K562 (cell line): ENCODE measurements at regions of chr15 and their contacts with region 1.

Region 1: GRCh38 chr15:79101866-79102578 is 11.4 kb upstream of the RASGRF1 start:
- DNase-seq: peak in 2 of 4 experiments; percentile 29 to 41
- ATAC-seq: peak; percentile 69
- H3K4me3 ChIP-seq: no peak overlapping the region
- H3K27ac ChIP-seq: no peak overlapping the region
- H3K4me1 ChIP-seq: no peaks in the 10 kb centered on the region
- H3K27me3 ChIP-seq: peaks cover 5 to 34% of the 10 kb centered on the region in 2 experiments; a peak in 2 of 5 replicates
- CTCF ChIP-seq: peak; percentile 16 to 46 (median 43); a peak in 3 of 6 replicates
- EP300 ChIP-seq: no peak
- POLR2A ChIP-seq: no peak
- RAD21 ChIP-seq: peak in 1 of 2 experiments; percentile 47; a peak in 2 of 4 replicates

Region 2: DNA sequence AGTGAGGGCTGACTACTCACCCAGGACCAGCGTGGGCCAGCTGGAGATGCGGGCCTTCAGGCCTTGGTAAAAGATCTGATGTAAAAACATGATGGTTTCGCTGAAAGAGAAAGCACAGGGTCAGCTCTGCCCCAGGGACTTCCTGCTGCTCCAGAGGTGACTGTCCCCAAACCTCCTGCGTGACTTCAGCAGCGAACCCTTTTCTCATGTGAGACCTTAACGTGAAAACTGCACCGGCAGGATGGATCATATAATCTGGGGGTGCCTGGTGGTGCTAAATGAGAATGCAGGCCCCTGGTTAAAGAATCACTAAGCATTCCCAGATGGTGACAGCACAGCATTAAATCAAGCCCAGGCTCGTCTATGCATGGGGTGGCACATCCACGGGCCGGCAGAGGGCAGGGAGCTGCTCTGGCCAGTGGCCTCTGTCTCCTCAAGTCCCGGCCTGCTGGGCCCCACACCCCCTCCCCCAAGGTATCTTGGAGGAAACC is 66.9 kb before region 1 on chr15:
- CTCF ChIA-PET with region 1: no interaction called
- POLR2A ChIA-PET with region 1: no interaction called
- in situ Hi-C with region 1: no loop called
- intact Hi-C with region 1: loop called (anchors 10 kb)
- DNase-seq: no peak
- ATAC-seq: peak; percentile 64; the same call in 2 of the 3 replicates
- H3K4me3 ChIP-seq: no peak overlapping the region
- H3K27ac ChIP-seq: no peak overlapping the region
- H3K4me1 ChIP-seq: peaks cover 0 to 4% of the 10 kb centered on the region in 2 experiments; a peak in 2 of 5 replicates
- H3K27me3 ChIP-seq: peaks cover 13 to 46% of the 10 kb centered on the region in 2 experiments; a peak in 3 of 5 replicates
- CTCF ChIP-seq: 0 out of 6 replicates have a peak, but pooled peaks of 1 of the 3 experiments have one; percentile 20
- EP300 ChIP-seq: no peak
- POLR2A ChIP-seq: no peak
- RAD21 ChIP-seq: no peak